ENCODE measurements at regions of chr10 and their contacts with region 1.

Region 1: DNA sequence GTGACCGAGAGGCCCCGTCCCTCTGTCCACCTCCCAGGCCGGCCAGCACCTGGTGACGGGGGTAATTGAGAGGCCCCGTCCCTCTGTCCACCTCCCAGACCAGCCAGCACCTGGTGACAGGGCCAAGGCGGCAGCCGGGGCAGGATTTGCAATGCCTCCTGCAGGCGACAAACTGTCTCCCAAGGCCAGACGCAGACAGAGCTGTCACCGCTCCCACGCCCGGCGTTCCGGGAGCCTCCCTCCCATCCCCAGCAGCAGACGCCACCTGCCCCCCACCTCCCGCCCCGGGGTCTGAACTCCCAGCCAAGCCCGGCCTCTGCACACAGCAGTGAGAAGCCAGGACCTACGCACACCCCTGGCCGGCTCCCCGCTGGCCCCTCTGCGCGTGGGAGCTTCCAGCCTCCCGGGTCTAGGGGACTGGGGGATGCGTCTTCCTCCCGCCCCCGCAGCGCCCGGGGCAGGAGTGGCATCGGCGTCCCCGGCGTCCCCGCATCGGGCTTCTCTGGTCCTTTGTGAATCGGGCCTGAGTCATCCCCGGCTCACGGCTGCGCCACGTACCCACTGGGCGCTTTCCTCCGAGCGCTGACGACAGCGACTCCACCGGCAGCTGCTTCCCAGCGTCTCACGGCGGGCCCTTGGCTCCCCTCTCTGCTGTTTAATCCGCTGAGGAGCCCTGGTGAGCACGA is 95.1 kb upstream of the DIP2C start:
- DNase-seq: peak; percentile 43 to 61
- ATAC-seq: peak; percentile 63 to 76
- H3K4me3 ChIP-seq: peak overlapping the region; percentile 43 to 64 (median 54)
- H3K27ac ChIP-seq: peak overlapping the region in 1 of 4 donors; percentile 42
- H3K4me1 ChIP-seq: peaks cover 3 to 19% of the 10 kb centered on the region in 2 donors
- H3K27me3 ChIP-seq: no peaks in the 10 kb centered on the region
- CTCF ChIP-seq: no peak
- POLR2A ChIP-seq: no peak

Region 2: GRCh38 chr10:191711-192518 is 592.6 kb before region 1 on chr10:
- in situ Hi-C with region 1: no loop called
- intact Hi-C with region 1: no loop called
- DNase-seq: peak; percentile 4 to 24
- ATAC-seq: peak; percentile 96
- H3K4me3 ChIP-seq: no peak overlapping the region
- H3K27ac ChIP-seq: peak overlapping the region in 1 of 4 donors; percentile 39
- H3K4me1 ChIP-seq: peaks cover 0 to 19% of the 10 kb centered on the region in 2 donors
- H3K27me3 ChIP-seq: no peaks in the 10 kb centered on the region
- CTCF ChIP-seq: no peak
- POLR2A ChIP-seq: no peak

Region 3: GRCh38 chr10:511101-511848 is 273.3 kb before region 1 on chr10:
- in situ Hi-C with region 1: loop called in 2 of 4 experiments (anchors 25 kb)
- intact Hi-C with region 1: loop called (anchors 1 kb)
- DNase-seq: peak; percentile 92 to 95
- ATAC-seq: peak; percentile 90 to 91
- H3K4me3 ChIP-seq: peak overlapping the region in 2 of 4 donors; percentile 12 to 19
- H3K27ac ChIP-seq: peak overlapping the region; percentile 69 to 80 (median 78)
- H3K4me1 ChIP-seq: peaks cover 20 to 25% of the 10 kb centered on the region in 2 donors
- H3K27me3 ChIP-seq: no peaks in the 10 kb centered on the region
- CTCF ChIP-seq: peak; percentile 95 to 98 (median 97)
- POLR2A ChIP-seq: no peak

Region 4: DNA sequence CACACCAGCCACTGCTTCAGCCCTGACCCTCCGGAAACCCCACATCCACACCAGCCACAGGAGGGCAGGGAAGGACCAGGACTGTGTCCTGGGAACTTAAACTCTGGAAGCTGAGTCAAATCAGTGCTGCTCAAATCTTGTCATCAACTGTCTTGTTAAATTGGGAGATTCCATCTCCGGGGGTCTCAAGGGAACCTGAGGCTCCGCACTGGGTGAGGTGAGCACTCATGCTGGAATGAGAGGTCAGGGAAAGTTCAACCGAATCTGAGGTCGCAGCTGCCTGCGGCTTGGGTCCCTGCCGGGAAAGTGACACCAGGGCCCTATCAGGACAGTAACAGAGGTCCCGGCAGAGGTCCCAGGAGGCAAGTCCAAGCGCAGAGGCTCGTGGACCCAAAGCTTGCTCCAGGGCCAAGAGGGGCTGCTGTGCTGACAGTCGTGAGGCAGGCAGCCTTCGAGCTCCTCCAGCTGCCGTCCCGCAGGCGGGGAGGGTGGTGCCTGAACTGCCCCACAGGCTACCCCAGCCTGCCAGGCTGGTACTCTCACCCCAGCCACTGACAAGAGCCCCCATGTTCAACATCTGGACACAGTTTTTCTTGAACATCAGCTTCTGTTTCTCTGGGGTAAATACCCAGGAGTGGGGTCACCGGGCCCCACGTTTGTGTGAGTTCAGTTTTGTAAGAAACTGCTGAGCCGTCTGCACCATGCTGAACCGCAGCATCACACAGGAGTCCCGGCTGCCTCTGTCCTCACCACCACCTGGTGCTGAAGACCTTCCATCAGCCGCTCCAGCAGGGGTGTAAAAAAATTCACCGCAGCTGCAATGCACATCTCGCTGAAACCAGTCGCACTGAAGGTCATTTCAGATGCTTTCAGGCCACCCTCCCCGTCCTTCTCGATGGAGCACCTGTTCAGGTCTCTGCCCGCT is 196.0 kb before region 1 on chr10:
- in situ Hi-C with region 1: loop called in 1 of 4 experiments (anchors 25 kb)
- intact Hi-C with region 1: loop called (anchors 5 kb)
- DNase-seq: peak; percentile 33 to 75
- ATAC-seq: peak; percentile 62 to 78
- H3K4me3 ChIP-seq: peak overlapping the region in 2 of 4 donors; percentile 0 to 9
- H3K27ac ChIP-seq: peak overlapping the region in 3 of 4 donors; percentile 11 to 39 (median 37)
- H3K4me1 ChIP-seq: peaks cover 27 to 38% of the 10 kb centered on the region in 2 donors
- H3K27me3 ChIP-seq: no peaks in the 10 kb centered on the region
- CTCF ChIP-seq: peak in 4 of 5 experiments; percentile 11 to 53 (median 35)
- POLR2A ChIP-seq: no peak

Region 5: DNA sequence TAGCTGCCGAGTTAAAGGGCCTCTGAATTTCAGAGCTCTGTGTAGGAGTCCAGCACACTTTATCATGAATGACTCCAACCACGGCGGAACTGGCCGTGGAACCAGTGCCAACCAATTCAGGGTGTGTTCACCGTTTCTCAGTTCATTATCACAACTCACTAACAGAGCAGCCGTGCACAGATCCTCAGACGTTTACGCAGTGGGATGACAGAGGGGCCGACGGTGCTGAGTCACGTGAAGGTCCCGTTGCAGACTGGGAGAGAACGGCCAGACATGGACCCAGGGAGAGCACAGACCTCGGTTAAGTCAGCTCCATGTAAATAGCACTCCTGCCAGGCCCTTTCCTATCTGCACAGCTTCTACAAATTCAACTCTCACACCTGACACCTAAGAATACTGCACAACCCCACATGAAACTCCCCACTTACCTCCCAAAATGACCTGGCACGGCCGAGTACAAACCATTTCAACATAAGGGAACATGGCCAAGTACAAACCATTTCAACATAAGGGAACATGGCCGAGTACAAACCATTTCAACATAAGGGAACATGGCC is 190.6 kb before region 1 on chr10:
- in situ Hi-C with region 1: loop called in 1 of 4 experiments (anchors 25 kb)
- intact Hi-C with region 1: loop called (anchors 5 kb)
- DNase-seq: peak in 1 of 2 donors; percentile 60
- ATAC-seq: peak; percentile 70 to 86
- H3K4me3 ChIP-seq: no peak overlapping the region
- H3K27ac ChIP-seq: peak overlapping the region in 3 of 4 donors; percentile 37 to 69 (median 62)
- H3K4me1 ChIP-seq: peaks cover 5 to 22% of the 10 kb centered on the region in 2 donors
- H3K27me3 ChIP-seq: no peaks in the 10 kb centered on the region
- CTCF ChIP-seq: no peak
- POLR2A ChIP-seq: no peak

Region 6: GRCh38 chr10:1142596-1142995 is 358.1 kb after region 1 on chr10:
- in situ Hi-C with region 1: no loop called
- intact Hi-C with region 1: no loop called
- DNase-seq: no peak
- ATAC-seq: no peak
- H3K4me3 ChIP-seq: no peak overlapping the region
- H3K27ac ChIP-seq: no peak overlapping the region
- H3K4me1 ChIP-seq: no peaks in the 10 kb centered on the region
- H3K27me3 ChIP-seq: no peaks in the 10 kb centered on the region
- CTCF ChIP-seq: no peak
- POLR2A ChIP-seq: no peak